ENCODE measurements at regions of chr19 and their contacts with region 1.

Region 1: DNA sequence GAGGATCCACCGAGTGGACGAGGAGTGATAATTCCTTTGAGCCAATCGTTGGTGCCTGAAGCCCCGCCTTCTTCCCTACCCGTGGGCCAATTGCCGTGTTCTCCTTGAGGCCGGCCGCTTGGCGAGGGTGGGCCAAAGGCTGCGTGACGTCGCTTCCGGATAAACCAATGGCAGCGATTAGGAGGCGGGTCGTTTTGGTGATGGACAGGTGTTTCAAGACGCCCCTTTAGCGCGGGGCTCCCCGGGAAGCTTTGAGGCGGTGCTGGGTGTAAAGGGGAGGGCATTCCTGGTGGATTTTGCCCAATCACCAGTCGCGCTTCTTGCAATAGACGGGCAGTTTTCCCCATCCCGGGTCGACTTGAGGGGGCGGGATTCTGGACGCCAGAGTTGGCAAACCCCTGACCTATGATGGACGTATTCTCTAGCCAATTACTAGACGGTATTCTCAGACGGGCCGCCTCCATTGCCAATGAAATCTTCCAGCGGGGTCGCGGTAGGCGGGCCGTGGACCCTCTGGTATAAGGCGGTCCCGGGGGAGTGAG is 310 bp upstream of the PRMT1 start:
- DNase-seq: peak; percentile 99 to 100
- ATAC-seq: peak; percentile 77 to 84 (median 78)
- H3K4me3 ChIP-seq: peak overlapping the region; percentile 95
- H3K27ac ChIP-seq: peak overlapping the region; percentile 99
- H3K4me1 ChIP-seq: peaks cover 38% of the 10 kb centered on the region
- H3K27me3 ChIP-seq: no peaks in the 10 kb centered on the region
- CTCF ChIP-seq: no peak

Region 2: GRCh38 chr19:49570138-49570856 is 106.5 kb before region 1 on chr19:
- intact Hi-C with region 1: loop called (anchors 5 to 10 kb)
- DNase-seq: no peak
- ATAC-seq: peak; percentile 61 to 77 (median 71)
- H3K4me3 ChIP-seq: peak overlapping the region; percentile 27
- H3K27ac ChIP-seq: peak overlapping the region; percentile 86
- H3K4me1 ChIP-seq: peaks cover 45% of the 10 kb centered on the region
- H3K27me3 ChIP-seq: no peaks in the 10 kb centered on the region
- CTCF ChIP-seq: peak; percentile 98

Region 3: GRCh38 chr19:49590071-49590970 is 86.4 kb before region 1 on chr19:
- intact Hi-C with region 1: no loop called
- DNase-seq: peak; percentile 93 to 94
- ATAC-seq: peak; percentile 79 to 86 (median 84)
- H3K4me3 ChIP-seq: peak overlapping the region; percentile 78
- H3K27ac ChIP-seq: peak overlapping the region; percentile 93
- H3K4me1 ChIP-seq: peaks cover 16% of the 10 kb centered on the region
- H3K27me3 ChIP-seq: no peaks in the 10 kb centered on the region
- CTCF ChIP-seq: no peak

Region 4: DNA sequence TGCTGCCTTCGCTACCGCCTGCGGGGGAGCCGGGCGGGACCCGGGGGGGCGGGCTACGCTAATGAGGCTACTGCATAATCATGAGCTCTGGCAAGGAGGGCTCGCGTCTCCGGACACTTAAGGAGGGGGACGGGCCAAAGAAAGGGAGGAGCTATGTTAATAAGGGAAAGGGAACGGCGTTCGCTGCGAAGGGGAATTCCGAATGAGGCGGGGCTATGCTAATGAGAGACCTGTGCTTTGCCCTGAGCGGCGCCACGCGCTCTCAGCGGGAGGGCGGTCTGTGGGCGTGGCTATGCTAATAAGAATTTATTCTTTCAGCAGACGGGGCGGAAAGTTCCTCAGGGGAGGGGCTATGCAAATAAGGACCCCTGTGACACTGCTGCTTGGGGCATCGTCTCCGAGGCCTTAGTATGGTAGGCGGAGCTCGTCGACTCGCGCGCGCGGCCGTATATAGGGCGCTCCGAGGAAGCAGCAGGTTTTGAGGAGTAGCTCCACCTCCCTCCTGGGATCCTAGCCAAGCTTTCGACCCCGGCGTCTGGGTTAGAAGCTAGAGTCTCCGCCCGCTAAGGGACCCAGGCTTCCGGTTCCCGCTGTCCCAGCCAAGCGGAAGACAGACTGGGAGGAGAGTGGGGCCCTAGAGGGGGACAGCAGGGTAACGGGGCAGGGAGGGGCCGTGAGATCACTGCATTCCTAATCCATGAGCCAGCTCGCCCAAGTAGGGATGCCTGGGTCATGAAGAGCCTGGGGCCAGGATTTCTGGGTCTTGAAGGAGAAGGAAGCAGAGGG is 36.5 kb before region 1 on chr19 and contains the start of gene RRAS:
- intact Hi-C with region 1: loop called in 1 of 2 experiments (anchors 2 kb)
- DNase-seq: peak; percentile 99 to 100
- ATAC-seq: peak; percentile 74 to 81 (median 76)
- H3K4me3 ChIP-seq: peak within 1 kb of the TSS; percentile 80
- H3K27ac ChIP-seq: peak within 1 kb of the TSS; percentile 98
- H3K4me1 ChIP-seq: peaks cover 35% of the 10 kb centered on the region
- H3K27me3 ChIP-seq: no peaks in the 10 kb centered on the region
- CTCF ChIP-seq: no peak
- total RNA-seq, gene RRAS: 22.6 to 57.0 (median 42.5) TPM

Region 5: DNA sequence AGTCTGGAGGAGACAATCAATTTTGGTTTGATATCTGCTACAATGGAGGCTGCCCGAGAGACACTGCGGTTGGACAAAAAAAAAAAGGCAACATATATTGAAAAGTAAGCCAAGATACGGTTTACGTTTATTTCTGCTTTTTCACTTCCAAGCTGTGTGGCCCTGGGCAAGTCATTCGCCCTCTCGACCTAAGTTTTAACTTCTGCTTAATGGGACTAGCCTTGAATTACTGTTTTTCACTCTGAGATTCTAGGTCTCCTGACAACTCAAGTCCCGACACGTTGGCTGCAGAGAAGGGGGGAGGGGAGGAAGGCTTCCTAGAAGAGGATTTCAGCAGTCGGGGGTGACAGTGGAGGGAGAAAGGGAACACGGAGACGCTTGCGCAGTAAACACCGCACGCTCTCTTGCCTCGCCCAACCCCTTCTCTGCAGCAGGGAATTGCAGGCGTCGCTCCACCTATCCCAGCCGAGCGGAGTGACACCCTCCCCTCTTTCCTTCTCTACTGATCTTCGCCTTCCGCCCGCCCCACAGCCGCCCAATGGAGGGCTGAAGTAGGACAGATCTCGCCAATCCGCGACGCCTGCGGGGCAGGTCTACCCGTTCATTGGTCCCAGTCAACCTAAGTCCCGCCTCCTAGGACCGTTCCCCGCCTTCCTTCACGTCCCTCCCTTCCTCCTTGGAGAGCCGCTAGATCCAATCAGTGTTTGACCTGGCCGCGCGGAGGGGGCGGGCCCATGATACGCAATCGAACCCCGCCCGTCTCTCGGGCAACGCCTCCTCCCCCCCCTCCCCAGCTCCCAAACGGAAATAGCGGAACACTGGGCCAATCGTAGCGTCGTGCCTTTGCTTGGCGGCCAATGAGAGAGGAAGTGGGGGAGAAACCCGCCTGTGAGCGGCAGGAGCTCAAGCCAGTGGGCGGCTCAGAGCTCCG is 89.5 kb after region 1 on chr19:
- intact Hi-C with region 1: loop called in 1 of 2 experiments (anchors 5 kb)
- DNase-seq: peak; percentile 100
- ATAC-seq: peak; percentile 90 to 94 (median 92)
- H3K4me3 ChIP-seq: peak overlapping the region; percentile 82
- H3K27ac ChIP-seq: peak overlapping the region; percentile 88
- H3K4me1 ChIP-seq: peaks cover 16% of the 10 kb centered on the region
- H3K27me3 ChIP-seq: no peaks in the 10 kb centered on the region
- CTCF ChIP-seq: no peak

Region 6: DNA sequence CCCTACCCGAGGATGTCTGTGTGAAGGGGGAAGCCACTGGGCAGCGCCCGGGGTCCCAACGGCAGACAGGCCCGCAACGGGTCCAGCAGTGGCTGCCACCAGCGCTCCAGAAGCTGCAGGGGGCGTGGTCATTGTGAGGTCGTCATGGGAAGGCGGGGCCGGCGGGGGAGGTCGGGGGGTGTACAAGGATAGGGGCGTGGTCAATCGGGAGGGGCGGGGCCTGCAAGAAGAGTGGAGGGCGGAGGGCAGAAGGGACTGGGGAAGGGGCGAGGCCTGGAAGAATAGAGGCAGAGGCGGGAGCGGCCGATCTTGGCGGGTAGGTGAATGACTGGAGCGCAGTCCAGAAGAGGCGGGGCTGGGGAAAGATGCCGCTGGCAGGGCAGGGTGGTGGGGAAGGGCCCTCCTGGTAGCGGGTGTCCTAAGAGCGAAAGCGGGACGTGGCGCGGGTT is 132.0 kb after region 1 on chr19:
- intact Hi-C with region 1: loop called in 1 of 2 experiments (anchors 10 kb)
- DNase-seq: peak; percentile 95 to 96
- ATAC-seq: peak; percentile 73 to 81 (median 77)
- H3K4me3 ChIP-seq: peak overlapping the region; percentile 90
- H3K27ac ChIP-seq: peak overlapping the region; percentile 88
- H3K4me1 ChIP-seq: peaks cover 11% of the 10 kb centered on the region
- H3K27me3 ChIP-seq: no peaks in the 10 kb centered on the region
- CTCF ChIP-seq: no peak

Region 7: GRCh38 chr19:49911381-49912145 is 234.8 kb after region 1 on chr19:
- intact Hi-C with region 1: no loop called
- DNase-seq: no peak
- ATAC-seq: no peak
- H3K4me3 ChIP-seq: no peak overlapping the region
- H3K27ac ChIP-seq: no peak overlapping the region
- H3K4me1 ChIP-seq: no peaks in the 10 kb centered on the region
- H3K27me3 ChIP-seq: no peaks in the 10 kb centered on the region
- CTCF ChIP-seq: no peak

Measured in psoas muscle (tissue), 8 donors.